ENCODE measurements at regions of chr5 and their contacts with region 1.

Region 1: GRCh38 chr5:96781031-96781937 is 26.5 kb downstream of the ERAP1 start:
- DNase-seq: peak; percentile 88
- ATAC-seq: peak; percentile 85
- H3K4me3 ChIP-seq: no peak overlapping the region; the same call in 1 of the 2 replicates
- H3K27ac ChIP-seq: peak overlapping the region; percentile 58
- H3K4me1 ChIP-seq: peaks cover 22% of the 10 kb centered on the region
- H3K27me3 ChIP-seq: no peaks in the 10 kb centered on the region
- CTCF ChIP-seq: no peak

Region 2: GRCh38 chr5:96763026-96763425 is 18.3 kb before region 1 on chr5:
- CTCF ChIA-PET with region 1: no interaction called
- POLR2A ChIA-PET with region 1: no interaction called
- intact Hi-C with region 1: loop called (anchors 2 kb)
- DNase-seq: no peak
- ATAC-seq: no peak
- H3K4me3 ChIP-seq: no peak overlapping the region
- H3K27ac ChIP-seq: no peak overlapping the region
- H3K4me1 ChIP-seq: peaks cover 25% of the 10 kb centered on the region
- H3K27me3 ChIP-seq: no peaks in the 10 kb centered on the region
- CTCF ChIP-seq: no peak

Region 3: DNA sequence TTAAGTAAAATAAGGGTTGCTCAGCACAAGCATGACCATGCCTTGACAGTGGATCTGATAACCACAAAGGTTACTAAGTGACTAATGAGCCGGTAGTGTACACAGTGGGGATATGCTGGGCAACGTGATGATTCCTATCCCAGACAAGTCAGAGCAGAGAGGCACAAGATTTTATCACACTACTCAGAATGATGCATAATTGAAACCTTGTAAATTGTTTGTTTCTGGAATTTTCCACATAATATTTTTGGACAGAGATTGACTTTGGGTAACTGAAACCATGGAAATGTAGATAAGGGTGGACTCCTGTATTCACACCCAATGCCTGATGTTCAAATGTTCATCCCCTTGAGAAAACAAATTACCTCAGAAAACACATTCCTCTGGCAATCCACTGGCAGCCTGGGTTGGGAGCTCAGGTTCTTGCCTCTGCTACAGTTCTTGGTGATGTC is 42.6 kb after region 1 on chr5:
- CTCF ChIA-PET with region 1: no interaction called
- POLR2A ChIA-PET with region 1: interaction called, 6 read pairs
- intact Hi-C with region 1: loop called (anchors 1 kb)
- DNase-seq: peak; percentile 96
- ATAC-seq: peak; percentile 100
- H3K4me3 ChIP-seq: no peak overlapping the region
- H3K27ac ChIP-seq: peak overlapping the region; percentile 71
- H3K4me1 ChIP-seq: peaks cover 29% of the 10 kb centered on the region
- H3K27me3 ChIP-seq: no peaks in the 10 kb centered on the region
- CTCF ChIP-seq: no peak

Measured in PC-3 (cell line).